Activated CD4-positive, alpha-beta T cell treated with anti-CD3 and anti-CD28 coated beads, Interleukin-2, amount 10 ng/mL, durations not matched to agents 24 days and 14 days (primary cell): ENCODE measurements at regions of chr5 and their contacts with region 1.

Region 1: GRCh38 chr5:55850839-55851674 is at the start of gene IL31RA:
- DNase-seq: no peak
- H3K4me3 Mint-ChIP-seq: no peak within 1 kb of the TSS
- H3K27ac Mint-ChIP-seq: peak within 1 kb of the TSS; percentile 14
- H3K4me1 Mint-ChIP-seq: peaks cover 49% of the 10 kb centered on the region
- H3K27me3 Mint-ChIP-seq: no peaks in the 10 kb centered on the region
- total RNA-seq, gene IL31RA: 0.63 and 0.92 TPM in 2 replicates

Region 2: GRCh38 chr5:55771175-55771655 is 79.8 kb before region 1 on chr5:
- intact Hi-C with region 1: loop called (anchors 5 kb)
- DNase-seq: no peak
- H3K4me3 Mint-ChIP-seq: peak overlapping the region; percentile 18
- H3K27ac Mint-ChIP-seq: peak overlapping the region; percentile 74
- H3K4me1 Mint-ChIP-seq: peaks cover 10% of the 10 kb centered on the region
- H3K27me3 Mint-ChIP-seq: peaks cover 4% of the 10 kb centered on the region

Region 3: GRCh38 chr5:55800924-55801323 is 50.1 kb before region 1 on chr5:
- intact Hi-C with region 1: no loop called
- DNase-seq: no peak
- H3K4me3 Mint-ChIP-seq: no peak overlapping the region
- H3K27ac Mint-ChIP-seq: no peak overlapping the region
- H3K4me1 Mint-ChIP-seq: no peaks in the 10 kb centered on the region
- H3K27me3 Mint-ChIP-seq: no peaks in the 10 kb centered on the region